Activated naive CD4-positive, alpha-beta T cell treated with anti-CD3 and anti-CD28 coated beads, Interleukin-2, amount 10 ng/mL, durations not matched to agents 7 days and 5 days (primary cell): ENCODE measurements at regions of chr7 and their contacts with region 1.

Region 1: GRCh38 chr7:131501422-131501821 is 55.0 kb downstream of the PODXL start:
- DNase-seq: peak; percentile 75
- H3K4me3 Mint-ChIP-seq: no peak overlapping the region
- H3K27ac Mint-ChIP-seq: peak overlapping the region; percentile 13
- H3K4me1 Mint-ChIP-seq: peaks cover 26% of the 10 kb centered on the region
- H3K27me3 Mint-ChIP-seq: peaks cover under 1% of the 10 kb centered on the region

Region 2: DNA sequence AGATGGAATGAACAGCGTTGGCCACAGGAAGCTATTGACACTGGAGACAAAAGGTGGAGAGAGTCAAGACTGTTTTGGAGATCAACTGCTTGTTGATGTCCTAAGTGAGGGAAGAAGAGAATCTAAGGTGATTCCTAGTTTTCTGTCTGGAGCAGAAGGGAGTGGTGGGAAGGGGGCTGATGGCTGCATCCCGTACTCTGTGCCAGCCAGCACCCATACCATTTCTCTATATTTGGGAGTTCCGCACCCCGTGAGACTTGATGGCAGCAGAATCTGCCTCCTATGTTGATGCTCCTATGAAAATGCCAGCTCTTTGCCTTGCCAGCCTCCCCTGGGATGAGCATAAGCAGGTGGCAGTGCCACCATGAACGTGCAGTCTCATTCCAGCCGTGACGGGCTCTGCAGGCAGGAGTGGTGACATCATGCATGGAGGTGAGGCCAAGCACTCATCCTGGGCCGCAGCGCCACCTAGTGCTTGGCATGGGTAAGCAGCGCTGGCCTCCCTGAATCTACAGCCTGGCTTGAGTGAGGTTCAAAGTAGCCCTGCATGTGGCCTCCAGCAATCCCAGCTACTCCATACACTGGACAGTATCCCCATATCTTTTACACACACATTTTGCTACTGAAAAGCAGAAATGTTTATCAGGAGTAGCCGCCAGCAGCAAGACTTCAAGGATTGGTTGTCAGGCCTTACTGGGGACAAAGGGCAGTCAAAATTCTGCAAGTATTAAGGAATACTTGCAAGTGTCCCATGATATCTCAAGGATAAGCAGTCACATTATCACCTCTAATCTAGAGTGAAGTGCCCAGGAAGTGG is 12.0 kb after region 1 on chr7:
- CTCF ChIA-PET with region 1: interaction called, 17 read pairs
- DNase-seq: peak; percentile 84
- H3K4me3 Mint-ChIP-seq: no peak overlapping the region
- H3K27ac Mint-ChIP-seq: no peak overlapping the region
- H3K4me1 Mint-ChIP-seq: peaks cover 19% of the 10 kb centered on the region
- H3K27me3 Mint-ChIP-seq: peaks cover 31% of the 10 kb centered on the region

Region 3: GRCh38 chr7:131538071-131538790 is 36.8 kb after region 1 on chr7:
- CTCF ChIA-PET with region 1: no interaction called
- DNase-seq: no peak
- H3K4me3 Mint-ChIP-seq: no peak overlapping the region
- H3K27ac Mint-ChIP-seq: no peak overlapping the region
- H3K4me1 Mint-ChIP-seq: no peaks in the 10 kb centered on the region
- H3K27me3 Mint-ChIP-seq: no peaks in the 10 kb centered on the region